ENCODE measurements at regions of chr16 and their contacts with region 1.

Region 1: GRCh38 chr16:71894921-71895678 is at the start of gene IST1:
- DNase-seq: peak; percentile 99
- H3K4me3 Mint-ChIP-seq: peak within 1 kb of the TSS; percentile 95
- H3K27ac Mint-ChIP-seq: peak within 1 kb of the TSS; percentile 95
- H3K4me1 Mint-ChIP-seq: peaks cover 11% of the 10 kb centered on the region
- H3K27me3 Mint-ChIP-seq: peaks cover 1% of the 10 kb centered on the region
- total RNA-seq, gene IST1: 149 and 156 TPM in 2 replicates

Region 2: GRCh38 chr16:71723537-71724319 is 171.4 kb before region 1 on chr16:
- intact Hi-C with region 1: loop called (anchors 5 kb)
- DNase-seq: peak; percentile 94
- H3K4me3 Mint-ChIP-seq: peak overlapping the region; percentile 79
- H3K27ac Mint-ChIP-seq: peak overlapping the region; percentile 53
- H3K4me1 Mint-ChIP-seq: peaks cover 13% of the 10 kb centered on the region
- H3K27me3 Mint-ChIP-seq: peaks cover 13% of the 10 kb centered on the region

Region 3: DNA sequence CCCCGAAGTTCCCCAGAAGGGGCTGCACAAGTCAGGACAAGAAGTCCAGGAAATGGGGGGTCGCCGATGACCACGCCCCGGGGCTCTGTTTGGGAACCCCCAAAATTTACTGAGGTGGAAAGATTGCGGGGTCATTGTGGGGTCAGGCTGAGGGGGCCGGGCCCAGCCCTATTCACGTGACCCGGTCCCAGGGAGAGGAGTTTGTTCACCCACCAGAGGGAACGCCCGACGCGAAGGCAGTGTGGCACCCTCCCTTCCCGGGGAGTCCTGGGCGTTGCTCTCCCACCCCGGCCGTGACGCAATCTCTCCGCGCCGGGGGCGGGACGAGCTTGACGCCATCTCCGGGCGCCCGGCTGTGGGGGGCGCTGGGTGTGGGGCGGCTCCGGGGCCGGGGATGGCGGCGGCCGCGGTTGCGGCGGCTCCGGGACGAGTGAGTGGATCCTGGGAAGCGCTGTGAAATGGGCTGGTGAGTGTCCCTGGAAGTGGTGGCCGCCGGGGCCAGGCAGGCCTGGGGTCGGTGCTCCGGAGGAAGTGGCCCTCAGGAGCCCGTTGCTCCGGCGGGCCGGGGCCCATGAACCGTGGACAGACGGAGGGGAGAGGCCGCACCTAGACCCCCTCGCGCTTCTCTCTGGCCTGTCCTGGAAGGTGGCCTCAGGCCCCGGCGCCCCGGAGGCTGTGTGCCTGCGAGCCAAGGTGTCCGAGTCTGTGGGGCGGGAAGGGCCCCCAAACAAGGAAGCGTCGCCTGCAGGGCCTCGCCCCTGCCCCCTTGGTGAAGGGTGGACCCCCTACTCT is 49.3 kb before region 1 on chr16 and contains the start of gene ATXN1L:
- intact Hi-C with region 1: loop called (anchors 1 kb)
- DNase-seq: peak; percentile 99
- H3K4me3 Mint-ChIP-seq: peak within 1 kb of the TSS; percentile 96
- H3K27ac Mint-ChIP-seq: peak within 1 kb of the TSS; percentile 97
- H3K4me1 Mint-ChIP-seq: peaks cover 45% of the 10 kb centered on the region
- H3K27me3 Mint-ChIP-seq: no peaks in the 10 kb centered on the region
- total RNA-seq, gene ATXN1L: 16.7 and 19.3 TPM in 2 replicates

Region 4: GRCh38 chr16:71870818-71871217 is 24.3 kb before region 1 on chr16:
- intact Hi-C with region 1: no loop called
- DNase-seq: no peak
- H3K4me3 Mint-ChIP-seq: no peak overlapping the region
- H3K27ac Mint-ChIP-seq: no peak overlapping the region
- H3K4me1 Mint-ChIP-seq: peaks cover 17% of the 10 kb centered on the region
- H3K27me3 Mint-ChIP-seq: no peaks in the 10 kb centered on the region

Region 5: GRCh38 chr16:71961066-71962039 is 66.3 kb after region 1 on chr16:
- intact Hi-C with region 1: loop called (anchors 2 kb)
- DNase-seq: peak; percentile 94
- H3K4me3 Mint-ChIP-seq: no peak overlapping the region
- H3K27ac Mint-ChIP-seq: no peak overlapping the region
- H3K4me1 Mint-ChIP-seq: peaks cover 5% of the 10 kb centered on the region
- H3K27me3 Mint-ChIP-seq: peaks cover 8% of the 10 kb centered on the region

Region 6: GRCh38 chr16:72008424-72009216 is 113.5 kb after region 1 on chr16 and contains the start of gene DHODH:
- intact Hi-C with region 1: loop called (anchors 2 kb)
- DNase-seq: peak; percentile 99
- H3K4me3 Mint-ChIP-seq: peak within 1 kb of the TSS; percentile 91
- H3K27ac Mint-ChIP-seq: peak within 1 kb of the TSS; percentile 93
- H3K4me1 Mint-ChIP-seq: peaks cover 22% of the 10 kb centered on the region
- H3K27me3 Mint-ChIP-seq: peaks cover 5% of the 10 kb centered on the region
- total RNA-seq, gene DHODH: 31.8 and 33.7 TPM in 2 replicates